Natural killer cell (primary cell): ENCODE measurements at regions of chr2 and their contacts with region 1.

Region 1: GRCh38 chr2:30315391-30316063 is 84.2 kb downstream of the LBH start:
- DNase-seq: peak in 1 of 2 donors; percentile 72
- ATAC-seq: peak; percentile 84 to 93 (median 85)
- H3K4me3 ChIP-seq: no peak overlapping the region
- H3K4me3 Mint-ChIP-seq: peak overlapping the region; percentile 48
- H3K27ac ChIP-seq: peak overlapping the region; percentile 15
- H3K27ac Mint-ChIP-seq: peak overlapping the region; percentile 76 to 85
- H3K4me1 ChIP-seq: peaks cover 30% of the 10 kb centered on the region
- H3K4me1 Mint-ChIP-seq: peaks cover 26 to 31% of the 10 kb centered on the region in 2 donors
- H3K27me3 ChIP-seq: no peaks in the 10 kb centered on the region
- H3K27me3 Mint-ChIP-seq: no peaks in the 10 kb centered on the region
- CTCF ChIP-seq: no peak

Region 2: GRCh38 chr2:30282086-30282485 is 33.4 kb before region 1 on chr2:
- intact Hi-C with region 1: no loop called
- DNase-seq: no peak
- ATAC-seq: no peak
- H3K4me3 ChIP-seq: no peak overlapping the region
- H3K4me3 Mint-ChIP-seq: no peak overlapping the region
- H3K27ac ChIP-seq: peak overlapping the region; percentile 48
- H3K27ac Mint-ChIP-seq: no peak overlapping the region
- H3K4me1 ChIP-seq: peaks cover 29% of the 10 kb centered on the region
- H3K4me1 Mint-ChIP-seq: peaks cover 18 to 29% of the 10 kb centered on the region in 2 donors
- H3K27me3 ChIP-seq: no peaks in the 10 kb centered on the region
- H3K27me3 Mint-ChIP-seq: no peaks in the 10 kb centered on the region
- CTCF ChIP-seq: no peak

Region 3: DNA sequence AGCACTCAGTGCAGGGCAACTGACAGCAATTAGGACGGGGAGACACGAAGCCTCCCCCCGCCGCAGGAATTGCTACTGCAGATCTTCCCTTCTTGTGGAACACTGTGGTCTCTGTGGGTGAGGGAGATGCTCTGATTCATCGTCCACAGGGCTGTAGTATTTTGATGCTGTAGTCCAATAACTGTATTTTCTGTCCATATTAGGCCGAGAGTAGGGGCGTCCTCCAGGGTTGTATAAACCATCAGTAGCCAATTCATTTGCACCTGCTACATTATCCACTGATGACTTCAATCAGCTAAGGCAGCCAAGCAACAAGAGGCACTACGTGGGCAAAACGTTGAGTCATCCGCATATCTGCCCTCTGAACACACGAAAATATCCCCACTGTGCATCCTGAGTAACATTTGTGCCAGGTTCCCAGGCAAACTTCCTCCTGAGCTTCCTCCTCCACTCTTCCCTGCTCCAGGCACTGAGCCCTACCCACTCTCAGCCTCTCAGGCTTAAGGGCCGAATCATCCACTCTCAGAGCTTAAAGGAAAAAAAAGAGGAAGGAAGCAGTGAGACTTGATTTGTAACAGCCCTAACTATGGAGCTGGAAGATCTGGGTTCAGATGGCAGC is 22.1 kb before region 1 on chr2:
- intact Hi-C with region 1: loop called (anchors 2 kb)
- DNase-seq: no peak
- ATAC-seq: peak; percentile 42 to 78 (median 43)
- H3K4me3 ChIP-seq: no peak overlapping the region
- H3K4me3 Mint-ChIP-seq: peak overlapping the region; percentile 64
- H3K27ac ChIP-seq: peak overlapping the region; percentile 64
- H3K27ac Mint-ChIP-seq: peak overlapping the region; percentile 92
- H3K4me1 ChIP-seq: peaks cover 24% of the 10 kb centered on the region
- H3K4me1 Mint-ChIP-seq: peaks cover 30 to 42% of the 10 kb centered on the region in 2 donors
- H3K27me3 ChIP-seq: no peaks in the 10 kb centered on the region
- H3K27me3 Mint-ChIP-seq: no peaks in the 10 kb centered on the region
- CTCF ChIP-seq: no peak

Region 4: GRCh38 chr2:30336978-30337841 is 21.7 kb after region 1 on chr2:
- intact Hi-C with region 1: loop called (anchors 1 kb)
- DNase-seq: peak; percentile 29 to 79
- ATAC-seq: peak; percentile 84 to 90 (median 90)
- H3K4me3 ChIP-seq: peak overlapping the region; percentile 1
- H3K4me3 Mint-ChIP-seq: peak overlapping the region; percentile 91
- H3K27ac ChIP-seq: peak overlapping the region; percentile 79
- H3K27ac Mint-ChIP-seq: peak overlapping the region; percentile 97 to 98
- H3K4me1 ChIP-seq: peaks cover 67% of the 10 kb centered on the region
- H3K4me1 Mint-ChIP-seq: peaks cover 58 to 66% of the 10 kb centered on the region in 2 donors
- H3K27me3 ChIP-seq: no peaks in the 10 kb centered on the region
- H3K27me3 Mint-ChIP-seq: no peaks in the 10 kb centered on the region
- CTCF ChIP-seq: no peak